ENCODE measurements at regions of chr1 and their contacts with region 1.

Region 1: DNA sequence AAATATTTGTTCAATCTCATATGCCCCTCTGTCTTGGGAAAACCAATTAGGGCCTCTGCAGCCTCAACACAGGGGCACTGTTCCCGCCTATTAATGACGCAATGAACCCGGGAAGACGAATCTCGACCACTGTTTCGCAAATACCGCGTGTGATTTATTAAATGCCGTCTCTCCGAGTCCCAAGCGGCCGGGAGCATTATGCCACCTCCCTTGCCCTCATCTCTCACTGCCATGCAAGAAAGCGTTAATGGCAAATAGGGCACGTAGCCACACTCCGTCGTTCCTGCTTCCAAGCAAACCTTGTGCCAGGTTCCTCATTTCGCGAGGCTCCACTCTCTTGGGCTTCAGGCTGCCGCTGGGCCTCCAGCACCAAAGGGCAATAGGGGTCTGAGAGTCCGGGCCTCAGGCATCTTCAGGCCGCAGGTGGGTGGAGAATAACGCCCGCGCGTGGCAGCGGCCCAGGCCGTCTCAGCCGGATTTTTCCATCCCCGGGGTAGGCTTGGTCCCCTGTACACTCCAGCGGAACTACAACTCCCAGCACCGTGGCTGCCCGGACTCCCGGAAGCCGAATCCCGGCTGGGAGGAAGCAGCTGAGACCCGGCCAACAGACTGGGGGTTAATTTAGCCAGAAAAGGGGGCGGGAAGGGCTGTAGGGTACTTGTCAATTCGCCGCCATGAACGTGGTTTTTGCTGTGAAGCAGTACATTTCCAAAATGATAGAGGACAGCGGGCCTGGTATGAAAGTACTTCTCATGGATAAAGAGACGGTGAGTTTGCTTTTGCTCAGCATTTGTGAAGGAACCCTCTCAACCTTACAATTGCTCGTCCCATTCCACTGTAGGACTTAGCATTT is at the start of gene VPS45:
- DNase-seq: peak; percentile 80 to 82
- H3K4me3 ChIP-seq: peak within 1 kb of the TSS; percentile 76
- H3K27ac ChIP-seq: peak within 1 kb of the TSS; percentile 87
- H3K4me1 ChIP-seq: peaks cover 23% of the 10 kb centered on the region
- H3K27me3 ChIP-seq: no peaks in the 10 kb centered on the region
- CTCF ChIP-seq: no peak
- total RNA-seq, gene VPS45: 27.8 and 30.3 TPM in 2 replicates

Region 2: GRCh38 chr1:149899460-149900293 is 167.7 kb before region 1 on chr1 and contains the start of gene BOLA1:
- CTCF ChIA-PET with region 1: no interaction called
- POLR2A ChIA-PET with region 1: no interaction called
- intact Hi-C with region 1: loop called (anchors 2 kb)
- DNase-seq: peak; percentile 84 to 85
- H3K4me3 ChIP-seq: peak within 1 kb of the TSS; percentile 67
- H3K27ac ChIP-seq: peak within 1 kb of the TSS; percentile 22; the same call in 1 of the 2 replicates
- H3K4me1 ChIP-seq: peaks cover 14% of the 10 kb centered on the region
- H3K27me3 ChIP-seq: no peaks in the 10 kb centered on the region
- CTCF ChIP-seq: no peak
- total RNA-seq, gene BOLA1: 16.2 and 23.7 TPM in 2 replicates

Region 3: GRCh38 chr1:149962123-149962548 is 105.3 kb before region 1 on chr1:
- CTCF ChIA-PET with region 1: no interaction called
- POLR2A ChIA-PET with region 1: no interaction called
- intact Hi-C with region 1: loop called (anchors 5 kb)
- DNase-seq: peak; percentile 44 to 69
- H3K4me3 ChIP-seq: no peak overlapping the region
- H3K27ac ChIP-seq: peak overlapping the region; percentile 52
- H3K4me1 ChIP-seq: peaks cover 7% of the 10 kb centered on the region
- H3K27me3 ChIP-seq: no peaks in the 10 kb centered on the region
- CTCF ChIP-seq: peak; percentile 83

Region 4: GRCh38 chr1:150010393-150011115 is 56.9 kb before region 1 on chr1 and contains the start of gene OTUD7B:
- CTCF ChIA-PET with region 1: no interaction called
- POLR2A ChIA-PET with region 1: interaction called, 5 read pairs
- intact Hi-C with region 1: loop called (anchors 5 kb)
- DNase-seq: peak; percentile 74 to 87
- H3K4me3 ChIP-seq: peak within 1 kb of the TSS; percentile 98
- H3K27ac ChIP-seq: peak within 1 kb of the TSS; percentile 91
- H3K4me1 ChIP-seq: peaks cover 66% of the 10 kb centered on the region
- H3K27me3 ChIP-seq: no peaks in the 10 kb centered on the region
- CTCF ChIP-seq: no peak
- total RNA-seq, gene OTUD7B: 30.2 and 30.7 TPM in 2 replicates

Region 5: DNA sequence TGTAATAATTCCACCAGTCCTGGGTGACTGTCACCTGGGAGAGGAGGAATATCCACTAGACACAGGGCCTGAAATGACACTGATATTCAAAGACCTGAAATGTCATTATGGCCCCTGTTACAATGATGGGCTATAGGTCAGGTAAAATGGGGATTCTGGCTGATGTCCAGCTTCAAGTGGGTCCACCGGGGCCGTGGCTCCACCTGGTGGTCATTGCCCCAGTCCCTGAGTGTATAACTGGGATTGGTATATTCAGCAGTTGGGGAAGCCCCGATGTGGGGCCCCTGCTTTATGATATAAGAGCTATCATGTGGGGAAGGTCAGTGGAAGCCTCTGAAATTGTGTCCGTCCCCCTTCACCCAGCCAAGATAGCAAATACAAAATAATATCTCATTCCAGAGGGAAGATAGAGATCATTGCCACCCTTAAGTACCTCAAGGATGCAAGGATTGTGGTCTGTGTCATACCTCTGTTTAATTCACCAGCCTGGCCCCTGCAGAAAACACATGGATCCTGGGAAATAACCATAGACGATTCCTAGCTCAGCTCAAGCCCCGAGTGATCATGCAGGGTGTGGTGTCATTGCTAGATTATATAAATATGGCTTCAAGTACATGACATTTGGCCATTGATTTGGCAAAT is 101.7 kb after region 1 on chr1:
- CTCF ChIA-PET with region 1: no interaction called
- POLR2A ChIA-PET with region 1: no interaction called
- intact Hi-C with region 1: loop called (anchors 5 kb)
- DNase-seq: peak in 1 of 2 experiments; percentile 65
- H3K4me3 ChIP-seq: no peak overlapping the region
- H3K27ac ChIP-seq: no peak overlapping the region
- H3K4me1 ChIP-seq: no peaks in the 10 kb centered on the region
- H3K27me3 ChIP-seq: no peaks in the 10 kb centered on the region
- CTCF ChIP-seq: peak; percentile 86

Region 6: GRCh38 chr1:150180474-150180873 is 113.1 kb after region 1 on chr1:
- CTCF ChIA-PET with region 1: no interaction called
- POLR2A ChIA-PET with region 1: no interaction called
- intact Hi-C with region 1: no loop called
- DNase-seq: no peak
- H3K4me3 ChIP-seq: no peak overlapping the region
- H3K27ac ChIP-seq: no peak overlapping the region
- H3K4me1 ChIP-seq: no peaks in the 10 kb centered on the region
- H3K27me3 ChIP-seq: no peaks in the 10 kb centered on the region
- CTCF ChIP-seq: no peak

Region 7: DNA sequence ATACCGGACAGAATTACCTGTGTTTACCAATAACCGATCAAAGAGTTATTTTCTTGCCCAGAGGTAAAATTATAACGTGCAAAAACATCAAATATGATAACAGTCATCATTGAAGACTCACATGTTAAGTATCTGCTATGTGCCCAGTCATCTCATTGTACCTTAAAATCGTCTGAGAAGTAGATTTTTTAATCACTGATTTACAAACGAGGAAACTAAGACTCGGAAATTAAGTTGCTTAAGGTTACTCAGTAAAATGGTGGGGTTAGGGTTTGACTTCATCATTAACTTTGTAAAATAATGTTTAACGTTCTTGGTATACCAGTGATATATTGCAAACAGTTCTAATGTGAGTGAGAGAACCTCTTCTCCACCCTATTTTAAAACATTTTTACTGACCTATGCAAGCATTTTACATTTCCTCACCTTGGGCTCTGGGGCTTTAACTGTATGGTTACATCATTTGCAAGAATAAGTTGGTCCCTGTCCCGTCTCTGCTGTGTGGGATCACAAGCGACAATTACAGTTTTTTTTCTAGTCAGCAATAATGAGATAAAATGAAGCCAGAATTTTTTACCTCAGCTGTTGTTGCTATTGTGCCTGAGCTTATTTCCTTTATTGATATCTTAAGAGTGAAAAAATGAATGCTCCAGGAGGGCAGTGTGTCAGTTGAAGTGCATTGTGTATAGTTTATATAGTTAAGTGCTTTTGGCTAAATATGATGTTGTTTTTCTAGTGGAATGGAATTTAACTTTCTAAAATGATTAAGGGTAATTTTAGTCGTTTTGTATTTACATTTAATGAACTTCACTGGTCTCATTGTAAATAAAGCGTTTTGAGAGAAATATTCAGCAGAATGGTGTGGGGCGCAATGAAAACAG is 299.2 kb after region 1 on chr1:
- CTCF ChIA-PET with region 1: no interaction called
- POLR2A ChIA-PET with region 1: no interaction called
- intact Hi-C with region 1: no loop called
- DNase-seq: no peak
- H3K4me3 ChIP-seq: peak overlapping the region; percentile 73
- H3K27ac ChIP-seq: peak overlapping the region; percentile 94; the same call in 1 of the 2 replicates
- H3K4me1 ChIP-seq: peaks cover 15% of the 10 kb centered on the region
- H3K27me3 ChIP-seq: no peaks in the 10 kb centered on the region
- CTCF ChIP-seq: no peak

Region 8: DNA sequence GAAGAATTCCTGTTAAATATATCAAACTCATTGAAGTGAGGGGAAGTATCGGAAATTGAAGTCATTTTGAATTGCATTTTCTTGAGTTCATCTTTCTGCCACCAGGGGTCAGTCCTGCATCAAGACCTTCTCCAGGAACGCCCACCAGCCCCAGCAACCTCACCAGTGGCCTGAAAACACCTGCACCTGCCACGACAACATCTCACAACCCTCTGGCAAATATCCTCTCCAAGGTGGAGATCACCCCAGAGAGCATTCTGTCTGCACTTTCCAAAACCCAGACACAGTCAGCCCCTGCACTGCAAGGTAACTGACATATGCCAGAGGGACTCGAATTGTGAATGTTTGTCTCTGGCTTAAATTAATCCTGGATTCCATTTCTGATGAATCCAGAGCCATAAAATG is 397.0 kb after region 1 on chr1:
- CTCF ChIA-PET with region 1: no interaction called
- POLR2A ChIA-PET with region 1: no interaction called
- intact Hi-C with region 1: no loop called
- DNase-seq: peak; percentile 35 to 49
- H3K4me3 ChIP-seq: no peak overlapping the region
- H3K27ac ChIP-seq: no peak overlapping the region
- H3K4me1 ChIP-seq: no peaks in the 10 kb centered on the region
- H3K27me3 ChIP-seq: no peaks in the 10 kb centered on the region
- CTCF ChIP-seq: peak; percentile 83